T-cell (primary cell): ENCODE measurements at regions of chr2 and their contacts with region 1.

Region 1: DNA sequence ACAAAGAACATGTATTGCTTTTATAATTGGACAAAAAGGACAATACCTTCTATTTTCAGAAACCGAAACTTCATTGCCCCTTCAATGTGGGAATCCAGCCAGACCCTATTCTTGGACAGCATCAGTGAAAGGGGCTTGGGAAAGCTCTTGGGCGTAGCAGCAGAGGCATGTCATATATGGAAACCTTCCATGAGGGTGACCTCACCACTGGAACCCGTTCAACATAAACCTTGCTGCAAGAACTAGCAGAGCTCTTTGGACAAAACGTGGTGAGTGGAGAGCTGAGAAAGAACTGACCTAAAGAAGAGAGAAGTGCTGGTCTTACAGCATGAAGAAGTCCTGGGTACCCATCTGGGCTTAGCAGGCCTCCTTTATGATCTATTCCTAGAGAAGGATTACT is 22.7 kb upstream of the ACTG2 start:
- DNase-seq: no peak
- ATAC-seq: no peak
- H3K4me3 ChIP-seq: no peak overlapping the region
- H3K4me3 Mint-ChIP-seq: no peak overlapping the region
- H3K27ac ChIP-seq: no peak overlapping the region
- H3K27ac Mint-ChIP-seq: no peak overlapping the region
- H3K4me1 ChIP-seq: no peaks in the 10 kb centered on the region
- H3K4me1 Mint-ChIP-seq: no peaks in the 10 kb centered on the region
- H3K27me3 ChIP-seq: no peaks in the 10 kb centered on the region
- H3K27me3 Mint-ChIP-seq: no peaks in the 10 kb centered on the region

Region 2: GRCh38 chr2:73444202-73444601 is 425.9 kb before region 1 on chr2:
- CTCF ChIA-PET with region 1: no interaction called
- POLR2A ChIA-PET with region 1: no interaction called
- DNase-seq: no peak
- ATAC-seq: no peak
- H3K4me3 ChIP-seq: no peak overlapping the region
- H3K4me3 Mint-ChIP-seq: no peak overlapping the region
- H3K27ac ChIP-seq: no peak overlapping the region
- H3K27ac Mint-ChIP-seq: no peak overlapping the region
- H3K4me1 ChIP-seq: no peaks in the 10 kb centered on the region
- H3K4me1 Mint-ChIP-seq: no peaks in the 10 kb centered on the region
- H3K27me3 ChIP-seq: no peaks in the 10 kb centered on the region
- H3K27me3 Mint-ChIP-seq: no peaks in the 10 kb centered on the region

Region 3: DNA sequence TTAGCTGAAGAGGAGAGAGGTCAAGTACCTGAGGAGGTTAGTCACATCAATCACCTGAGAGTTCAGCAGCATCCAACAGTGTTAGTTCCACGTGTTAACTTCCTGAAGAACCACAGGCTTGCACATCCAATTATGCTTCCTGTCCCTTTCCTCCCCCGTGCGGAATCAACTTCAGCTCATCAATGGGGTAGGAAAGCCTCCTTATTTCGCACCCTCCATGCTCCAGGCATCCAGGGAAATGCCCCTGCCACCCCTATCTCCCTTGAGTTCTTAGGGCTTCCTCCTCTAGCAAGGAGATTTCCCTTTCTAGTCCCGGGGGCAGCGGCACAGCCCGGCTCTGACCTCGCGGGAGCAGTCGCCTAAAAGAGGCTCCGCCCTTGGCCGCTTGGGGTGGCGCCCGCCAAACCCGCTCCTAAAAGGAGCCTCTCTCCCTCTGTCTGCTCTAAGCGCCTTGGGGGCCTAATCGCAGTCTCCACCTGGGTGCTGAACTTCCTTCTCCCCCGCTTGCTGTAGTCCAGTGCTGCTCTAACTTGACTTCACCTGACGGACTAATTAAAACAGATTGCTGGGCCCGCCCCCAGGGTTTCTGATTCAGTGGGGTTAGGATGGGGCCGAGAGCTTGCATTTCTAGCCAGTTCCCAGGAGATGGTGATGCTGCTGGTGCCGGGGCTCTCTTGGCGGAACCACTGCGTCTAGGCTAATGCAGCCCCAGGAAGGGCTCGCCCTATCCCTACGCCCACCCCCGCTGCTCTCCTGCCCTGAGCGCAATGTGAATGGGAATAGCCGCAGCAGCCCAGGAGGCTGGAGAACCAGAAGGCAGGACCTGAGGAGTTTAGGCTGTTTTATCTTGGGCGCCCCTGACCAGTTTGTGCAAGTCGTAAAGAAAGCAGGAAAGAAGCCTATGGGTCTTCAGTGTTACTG is 111.3 kb after region 1 on chr2:
- CTCF ChIA-PET with region 1: no interaction called
- POLR2A ChIA-PET with region 1: interaction called in 1 of 2 experiments, 16 read pairs
- DNase-seq: peak in 4 of 35 experiments; percentile 21 to 36 (median 26)
- ATAC-seq: no peak
- H3K4me3 ChIP-seq: peak overlapping the region; percentile 18 to 52
- H3K4me3 Mint-ChIP-seq: peak overlapping the region; percentile 59 to 65 (median 64)
- H3K27ac ChIP-seq: no peak overlapping the region
- H3K27ac Mint-ChIP-seq: peak overlapping the region in 1 of 2 donors; percentile 94
- H3K4me1 ChIP-seq: peaks cover 51 to 72% of the 10 kb centered on the region in 2 experiments
- H3K4me1 Mint-ChIP-seq: peaks cover 68 to 69% (median 69%) of the 10 kb centered on the region in 3 donors
- H3K27me3 ChIP-seq: no peaks in the 10 kb centered on the region
- H3K27me3 Mint-ChIP-seq: no peaks in the 10 kb centered on the region